HCT116 (cell line): ENCODE measurements at regions of chr19 and their contacts with region 1.

Region 1: GRCh38 chr19:49443366-49444099 is 2.2 kb upstream of the SLC17A7 start:
- DNase-seq: peak; percentile 87
- ATAC-seq: peak; percentile 80
- H3K4me3 ChIP-seq: peak overlapping the region; percentile 63 to 80
- H3K27ac ChIP-seq: peak overlapping the region; percentile 92
- H3K4me1 ChIP-seq: peaks cover 16 to 43% of the 10 kb centered on the region in 2 experiments; a peak in 3 of 4 replicates
- H3K27me3 ChIP-seq: peaks cover 10% of the 10 kb centered on the region
- CTCF ChIP-seq: peak; percentile 75 to 95 (median 88)
- POLR2A ChIP-seq: no peak
- RAD21 ChIP-seq: peak; percentile 77

Region 2: DNA sequence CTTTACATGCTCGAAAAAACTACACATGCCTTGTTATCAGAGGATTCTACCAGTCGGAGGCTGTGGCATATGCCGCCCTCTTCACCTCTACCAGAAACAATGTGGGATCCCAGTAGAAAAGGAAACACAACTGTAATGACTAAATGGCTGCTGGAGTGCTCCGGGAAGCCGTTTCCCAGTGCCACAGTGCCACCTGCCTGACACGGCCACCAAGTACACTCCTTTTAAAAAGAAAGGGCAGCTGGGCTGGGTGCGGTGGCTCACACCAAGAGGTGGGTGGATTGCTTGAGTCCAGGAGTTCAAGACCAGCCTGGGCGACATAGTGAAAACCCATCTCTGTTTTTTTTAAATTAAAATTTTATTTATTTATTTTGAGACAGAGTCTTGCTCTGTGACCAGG is 218.7 kb before region 1 on chr19:
- CTCF ChIA-PET with region 1: interaction called, 6 read pairs
- POLR2A ChIA-PET with region 1: no interaction called
- RAD21 ChIA-PET with region 1: no interaction called
- intact Hi-C with region 1: loop called (anchors 2 kb)
- DNase-seq: peak; percentile 61
- ATAC-seq: peak; percentile 87
- H3K4me3 ChIP-seq: no peak overlapping the region
- H3K27ac ChIP-seq: no peak overlapping the region
- H3K4me1 ChIP-seq: peaks cover 7 to 20% of the 10 kb centered on the region in 2 experiments; a peak in 3 of 4 replicates
- H3K27me3 ChIP-seq: no peaks in the 10 kb centered on the region
- CTCF ChIP-seq: peak; percentile 61 to 82 (median 67)
- POLR2A ChIP-seq: no peak
- RAD21 ChIP-seq: peak; percentile 93

Region 3: DNA sequence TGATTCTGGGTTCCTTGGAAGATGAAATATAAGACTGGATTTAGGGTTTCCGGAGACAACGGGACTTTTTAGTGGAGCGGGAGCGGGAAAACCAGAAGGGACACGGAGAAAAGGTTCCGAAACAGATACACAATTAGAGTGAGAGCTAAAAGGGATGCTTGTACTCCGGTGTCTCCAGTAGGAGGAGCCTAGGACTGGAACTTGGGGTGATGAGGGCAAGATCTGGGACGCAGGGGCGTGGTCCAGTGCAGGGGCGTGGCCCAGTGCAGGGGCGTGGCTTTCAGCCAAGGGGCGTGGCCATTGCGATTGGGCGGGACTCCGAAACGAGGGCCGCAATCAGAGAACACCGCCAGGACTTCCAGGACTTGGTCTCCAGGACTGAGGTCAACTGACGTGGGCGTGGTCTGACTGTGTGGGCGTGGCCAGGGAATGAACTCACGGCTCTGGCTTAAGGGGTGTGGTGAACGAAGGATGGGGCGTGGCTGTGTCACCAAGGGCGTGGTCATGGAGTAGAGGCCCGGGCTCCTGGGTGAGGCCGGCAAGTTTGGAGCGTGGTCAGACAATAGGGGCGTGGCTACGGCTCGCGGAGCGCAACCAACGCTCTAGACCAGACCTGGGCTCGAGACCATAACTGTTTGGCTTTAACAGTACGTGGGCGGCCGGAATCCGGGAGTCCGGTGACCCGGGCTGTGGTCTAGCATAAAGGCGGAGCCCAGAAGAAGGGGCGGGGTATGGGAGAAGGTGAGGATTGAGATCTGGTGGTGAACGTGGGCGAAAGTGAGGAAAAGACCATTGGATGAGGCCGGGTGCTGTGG is 80.1 kb before region 1 on chr19 and contains the start of gene DKKL1:
- CTCF ChIA-PET with region 1: interaction called, 4 read pairs
- POLR2A ChIA-PET with region 1: no interaction called
- RAD21 ChIA-PET with region 1: no interaction called
- intact Hi-C with region 1: loop called (anchors 1 kb)
- DNase-seq: peak; percentile 99
- ATAC-seq: peak; percentile 86
- H3K4me3 ChIP-seq: peak within 1 kb of the TSS; percentile 93
- H3K27ac ChIP-seq: peak within 1 kb of the TSS; percentile 94
- H3K4me1 ChIP-seq: peaks cover 10 to 27% of the 10 kb centered on the region in 2 experiments
- H3K27me3 ChIP-seq: no peaks in the 10 kb centered on the region
- CTCF ChIP-seq: peak in 1 of 3 experiments; percentile 22; a peak in 3 of 6 replicates
- POLR2A ChIP-seq: no peak
- RAD21 ChIP-seq: no peak; the same call in none of the 2 replicates
- total RNA-seq, gene DKKL1: 1.0 TPM

Region 4: GRCh38 chr19:49391581-49392399 is 51.7 kb before region 1 on chr19:
- CTCF ChIA-PET with region 1: interaction called, 15 read pairs
- POLR2A ChIA-PET with region 1: interaction called, 3 read pairs
- RAD21 ChIA-PET with region 1: interaction called, 5 read pairs
- intact Hi-C with region 1: loop called (anchors 1 kb)
- DNase-seq: peak; percentile 60
- ATAC-seq: peak; percentile 98
- H3K4me3 ChIP-seq: no peak overlapping the region
- H3K27ac ChIP-seq: no peak overlapping the region
- H3K4me1 ChIP-seq: peaks cover 3 to 10% of the 10 kb centered on the region in 2 experiments; a peak in 3 of 4 replicates
- H3K27me3 ChIP-seq: no peaks in the 10 kb centered on the region
- CTCF ChIP-seq: peak; percentile 91 to 97 (median 93)
- POLR2A ChIP-seq: no peak
- RAD21 ChIP-seq: peak; percentile 98